Heart left ventricle (tissue), 16 donors: ENCODE measurements at regions of chr10 and their contacts with region 1.

Region 1: DNA sequence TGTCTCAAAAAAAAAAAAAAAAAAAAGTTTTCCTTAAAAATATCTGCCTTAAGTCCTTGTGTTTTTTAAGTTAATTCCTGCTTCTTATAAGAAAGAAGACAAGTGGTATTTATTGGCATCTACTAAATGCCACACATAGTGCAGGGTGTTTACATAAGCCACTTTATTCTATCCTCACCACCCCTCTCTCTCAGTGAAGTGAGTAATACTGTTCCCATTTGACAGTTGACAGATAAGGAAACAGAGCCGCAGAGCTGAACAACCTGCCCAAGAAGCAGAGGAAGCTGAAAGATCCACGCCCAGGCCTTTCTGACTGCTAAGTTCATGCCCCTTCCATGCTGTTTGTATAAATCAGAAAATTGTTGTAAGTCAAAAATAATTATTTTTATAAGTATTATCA is 54.1 kb downstream of the ABLIM1 start:
- DNase-seq: peak in 1 of 5 donors; percentile 58
- ATAC-seq: peak; percentile 72 to 88 (median 82)
- H3K4me3 ChIP-seq: no peak overlapping the region
- H3K27ac ChIP-seq: peak overlapping the region; percentile 52 to 85 (median 69)
- H3K4me1 ChIP-seq: peaks cover 6 to 88% (median 64%) of the 10 kb centered on the region in 12 donors
- H3K27me3 ChIP-seq: no peaks in the 10 kb centered on the region
- CTCF ChIP-seq: no peak
- POLR2A ChIP-seq: no peak

Region 2: DNA sequence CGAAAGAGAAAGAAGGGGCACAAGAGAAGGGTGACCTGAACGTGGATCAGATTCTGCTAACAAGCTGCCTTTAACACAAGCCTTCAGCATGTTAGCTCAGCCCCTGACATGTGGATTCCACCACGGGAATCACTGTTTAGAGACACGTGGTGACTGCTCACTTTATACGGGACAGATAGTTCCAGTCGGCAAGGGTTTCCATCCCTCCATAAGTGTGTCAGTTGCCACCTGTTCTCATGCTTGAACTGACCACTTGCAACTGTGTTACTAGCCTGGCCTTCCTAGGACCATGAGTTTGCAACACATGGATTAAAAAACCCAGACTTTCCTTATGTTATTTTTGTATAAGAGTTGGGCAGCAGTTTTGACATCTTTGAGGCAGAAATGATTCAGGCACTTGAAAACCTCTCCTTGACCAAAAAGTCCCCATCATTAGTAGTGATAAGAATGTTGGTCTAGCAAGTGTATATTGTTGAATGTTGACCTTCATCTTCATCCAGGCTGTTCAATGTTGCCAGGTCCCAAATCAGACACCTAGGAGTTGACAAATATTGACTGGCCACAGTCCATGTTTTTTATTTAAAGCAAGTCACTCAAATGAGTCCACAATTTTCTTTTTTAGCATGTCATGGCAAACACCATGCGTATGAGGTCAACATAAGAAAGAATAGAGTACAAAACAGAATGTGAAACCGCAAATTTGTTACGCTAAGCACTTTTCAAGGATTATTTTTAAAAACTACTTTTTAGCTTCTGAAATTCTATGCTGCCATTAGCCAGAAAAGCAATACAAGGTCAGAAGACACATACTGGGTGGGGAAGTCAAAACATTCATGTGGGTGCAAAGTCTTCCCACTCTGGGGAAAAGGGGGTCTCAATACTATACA is 47.5 kb before region 1 on chr10:
- intact Hi-C with region 1: loop called in 1 of 10 experiments (anchors 5 kb)
- DNase-seq: no peak
- ATAC-seq: peak; percentile 32 to 36 (median 35)
- H3K4me3 ChIP-seq: no peak overlapping the region
- H3K27ac ChIP-seq: peak overlapping the region; percentile 47 to 89 (median 70)
- H3K4me1 ChIP-seq: peaks cover 4 to 94% (median 52%) of the 10 kb centered on the region in 12 donors
- H3K27me3 ChIP-seq: no peaks in the 10 kb centered on the region
- CTCF ChIP-seq: no peak
- POLR2A ChIP-seq: no peak

Region 3: DNA sequence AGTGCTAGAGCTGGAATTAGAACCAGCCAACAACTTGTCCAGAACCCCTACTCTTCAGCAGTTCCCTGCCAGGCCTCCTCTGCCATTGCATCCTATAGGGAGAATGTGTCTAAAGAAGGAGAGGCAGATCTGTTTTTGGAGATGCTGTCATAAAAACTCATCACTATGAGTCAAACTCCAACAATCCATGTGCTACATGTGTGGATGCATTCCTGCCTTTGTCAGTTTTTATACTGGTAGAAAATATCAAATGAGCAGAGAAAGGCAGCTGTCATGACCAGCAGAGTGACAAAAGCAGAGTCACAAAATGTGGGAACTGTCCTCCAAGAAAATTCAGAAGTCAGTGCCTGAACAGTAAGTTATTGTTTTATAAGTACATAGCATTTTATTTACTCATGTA is 38.9 kb before region 1 on chr10:
- intact Hi-C with region 1: loop called in 1 of 10 experiments (anchors 5 kb)
- DNase-seq: no peak
- ATAC-seq: no peak
- H3K4me3 ChIP-seq: no peak overlapping the region
- H3K27ac ChIP-seq: peak overlapping the region in 4 of 12 donors; percentile 7 to 25 (median 14)
- H3K4me1 ChIP-seq: peaks cover 0 to 45% (median 15%) of the 10 kb centered on the region in 12 donors
- H3K27me3 ChIP-seq: no peaks in the 10 kb centered on the region
- CTCF ChIP-seq: no peak
- POLR2A ChIP-seq: no peak